Caco-2 (cell line): ENCODE measurements at regions of chr11 and their contacts with region 1.

Region 1: DNA sequence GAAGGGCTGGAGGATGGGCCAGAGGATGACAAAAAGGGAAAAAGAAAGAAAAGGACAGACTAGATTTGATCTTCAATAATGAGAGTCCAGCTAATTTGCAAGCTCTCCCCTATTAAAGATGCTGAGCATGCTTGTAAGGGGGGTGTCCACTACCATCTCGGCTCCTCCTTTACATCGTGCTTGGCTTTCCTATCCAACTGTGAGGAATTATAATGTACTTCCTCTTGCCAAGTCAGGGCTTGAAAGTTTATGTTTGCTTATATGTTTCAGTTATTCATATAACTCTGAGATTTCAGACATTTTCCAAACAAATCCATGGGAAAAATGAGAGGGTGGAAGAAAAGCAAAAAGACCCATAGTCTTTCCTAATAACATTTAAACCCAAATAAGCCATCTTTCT is 387.1 kb downstream of the METTL15 start:
- DNase-seq: no peak
- H3K4me3 ChIP-seq: no peak overlapping the region
- H3K4me3 Mint-ChIP-seq: no peak overlapping the region
- H3K27ac Mint-ChIP-seq: no peak overlapping the region
- H3K4me1 ChIP-seq: no peaks in the 10 kb centered on the region
- H3K4me1 Mint-ChIP-seq: no peaks in the 10 kb centered on the region
- H3K27me3 ChIP-seq: no peaks in the 10 kb centered on the region
- H3K27me3 Mint-ChIP-seq: no peaks in the 10 kb centered on the region
- CTCF ChIP-seq: no peak

Region 2: DNA sequence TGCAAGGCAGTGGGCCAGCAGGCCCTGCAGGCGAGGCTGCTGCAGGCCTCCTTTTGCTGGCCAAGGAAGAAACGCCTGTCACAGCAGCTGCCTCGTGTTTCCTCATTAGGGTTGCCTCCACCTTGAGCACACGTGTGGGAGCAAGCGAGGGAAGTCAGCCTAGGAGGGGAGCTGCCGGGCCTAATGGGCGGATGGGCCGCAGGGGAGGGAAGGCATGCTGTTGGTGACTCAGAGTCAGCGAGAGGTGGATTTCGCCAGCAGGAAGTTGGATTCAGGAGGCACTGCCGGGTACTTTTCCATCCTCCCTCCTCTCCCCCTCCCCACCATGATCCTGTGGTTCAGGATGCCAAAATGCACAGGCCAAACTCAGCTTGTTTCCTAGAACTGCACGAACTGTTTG is 111.6 kb after region 1 on chr11:
- CTCF ChIA-PET with region 1: no interaction called
- POLR2A ChIA-PET with region 1: no interaction called
- intact Hi-C with region 1: loop called (anchors 5 kb)
- DNase-seq: no peak
- H3K4me3 ChIP-seq: no peak overlapping the region
- H3K4me3 Mint-ChIP-seq: no peak overlapping the region
- H3K27ac Mint-ChIP-seq: no peak overlapping the region
- H3K4me1 ChIP-seq: no peaks in the 10 kb centered on the region
- H3K4me1 Mint-ChIP-seq: no peaks in the 10 kb centered on the region
- H3K27me3 ChIP-seq: no peaks in the 10 kb centered on the region
- H3K27me3 Mint-ChIP-seq: no peaks in the 10 kb centered on the region
- CTCF ChIP-seq: no peak